CD4-positive, alpha-beta memory T cell (primary cell): ENCODE measurements at regions of chr14 and their contacts with region 1.

Region 1: DNA sequence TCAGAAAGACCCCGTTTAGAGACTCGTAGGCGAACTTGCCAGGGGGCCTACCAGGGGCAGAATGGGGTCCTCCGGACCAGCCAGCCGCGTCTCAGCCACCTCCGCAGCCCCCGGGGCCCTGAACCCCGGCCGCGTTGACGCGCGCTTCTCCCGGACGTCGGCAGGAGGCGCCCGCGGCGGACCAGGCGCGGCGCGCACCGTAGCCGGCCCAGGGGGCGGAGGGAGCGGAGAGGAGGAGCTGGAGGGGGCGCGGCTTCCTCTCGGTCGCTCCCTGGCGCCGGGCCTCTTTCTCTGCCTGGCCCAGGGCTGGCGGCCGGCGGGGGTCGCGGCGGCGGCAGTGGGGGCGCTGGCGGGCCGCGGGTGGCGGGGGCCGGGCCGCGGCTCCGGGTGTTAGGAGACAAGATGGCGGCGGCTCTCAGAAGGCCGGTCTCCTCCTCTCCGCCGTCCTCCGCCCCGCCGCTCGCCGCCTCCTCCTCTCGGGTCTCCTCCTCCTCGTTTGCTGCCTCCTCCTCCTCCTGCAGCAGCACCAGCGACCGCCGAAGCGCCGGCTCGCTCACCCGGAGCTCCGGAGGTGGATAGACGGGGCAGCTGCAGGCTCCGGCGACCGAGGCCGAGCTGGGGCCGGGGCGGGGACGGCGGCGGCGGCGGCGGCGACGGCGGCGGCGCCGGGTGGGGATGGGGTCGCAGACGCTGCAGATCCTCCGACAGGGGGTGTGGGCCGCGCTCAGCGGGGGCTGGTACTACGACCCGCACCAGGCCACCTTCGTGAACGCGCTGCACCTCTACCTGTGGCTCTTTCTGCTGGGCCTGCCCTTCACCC is at the start of gene PCNX1:
- DNase-seq: peak; percentile 94 to 95 (median 95)
- H3K4me3 ChIP-seq: peak within 1 kb of the TSS; percentile 74 to 79
- H3K4me3 Mint-ChIP-seq: peak within 1 kb of the TSS; percentile 88 to 99 (median 94)
- H3K27ac ChIP-seq: peak within 1 kb of the TSS; percentile 79
- H3K27ac Mint-ChIP-seq: peak within 1 kb of the TSS; percentile 95 to 99 (median 98)
- H3K4me1 ChIP-seq: peaks cover 61% of the 10 kb centered on the region
- H3K4me1 Mint-ChIP-seq: peaks cover 38 to 73% (median 61%) of the 10 kb centered on the region in 4 donors
- H3K27me3 ChIP-seq: no peaks in the 10 kb centered on the region
- H3K27me3 Mint-ChIP-seq: no peaks in the 10 kb centered on the region
- total RNA-seq, gene PCNX1: 115 to 128 TPM

Region 2: GRCh38 chr14:70816525-70816924 is 90.9 kb before region 1 on chr14:
- CTCF ChIA-PET with region 1: interaction called, 49 read pairs
- POLR2A ChIA-PET with region 1: interaction called, 15 read pairs
- intact Hi-C with region 1: loop called (anchors 1 kb)
- DNase-seq: no peak
- H3K4me3 ChIP-seq: no peak overlapping the region
- H3K4me3 Mint-ChIP-seq: no peak overlapping the region
- H3K27ac ChIP-seq: no peak overlapping the region
- H3K27ac Mint-ChIP-seq: peak overlapping the region in 2 of 7 donors; percentile 23 to 78
- H3K4me1 ChIP-seq: peaks cover 11% of the 10 kb centered on the region
- H3K4me1 Mint-ChIP-seq: peaks cover 4 to 10% (median 6%) of the 10 kb centered on the region in 4 donors
- H3K27me3 ChIP-seq: no peaks in the 10 kb centered on the region
- H3K27me3 Mint-ChIP-seq: no peaks in the 10 kb centered on the region

Region 3: DNA sequence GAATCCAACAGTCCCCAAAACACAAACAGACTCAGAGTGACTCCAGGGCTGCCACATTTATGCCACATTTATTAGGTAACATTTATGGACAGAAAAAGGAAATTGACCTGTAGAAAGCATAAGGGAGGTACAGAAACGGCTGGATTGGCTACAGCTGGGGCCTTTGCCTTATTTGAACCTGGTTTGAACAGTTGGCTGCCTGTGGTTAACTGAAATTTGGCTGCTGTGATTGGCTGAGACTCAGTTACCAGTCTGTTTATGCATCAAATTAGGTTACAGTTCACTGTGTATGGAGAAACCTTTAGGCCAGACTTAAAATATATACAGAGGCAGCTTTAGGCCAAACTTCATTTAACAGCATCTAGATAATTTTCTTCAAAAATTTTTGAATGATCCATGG is 27.9 kb before region 1 on chr14:
- CTCF ChIA-PET with region 1: interaction called, 85 read pairs
- POLR2A ChIA-PET with region 1: interaction called, 164 read pairs
- intact Hi-C with region 1: no loop called
- DNase-seq: no peak
- H3K4me3 ChIP-seq: no peak overlapping the region
- H3K4me3 Mint-ChIP-seq: no peak overlapping the region
- H3K27ac ChIP-seq: no peak overlapping the region
- H3K27ac Mint-ChIP-seq: no peak overlapping the region
- H3K4me1 ChIP-seq: peaks cover 21% of the 10 kb centered on the region
- H3K4me1 Mint-ChIP-seq: peaks cover 21 to 39% (median 29%) of the 10 kb centered on the region in 4 donors
- H3K27me3 ChIP-seq: no peaks in the 10 kb centered on the region
- H3K27me3 Mint-ChIP-seq: no peaks in the 10 kb centered on the region

Region 4: GRCh38 chr14:70926235-70926830 is 18.9 kb after region 1 on chr14:
- CTCF ChIA-PET with region 1: interaction called, 62 read pairs
- POLR2A ChIA-PET with region 1: interaction called, 73 read pairs
- intact Hi-C with region 1: no loop called
- DNase-seq: no peak
- H3K4me3 ChIP-seq: no peak overlapping the region
- H3K4me3 Mint-ChIP-seq: peak overlapping the region in 4 of 8 donors; percentile 13 to 80 (median 60)
- H3K27ac ChIP-seq: no peak overlapping the region
- H3K27ac Mint-ChIP-seq: peak overlapping the region; percentile 6 to 91 (median 39)
- H3K4me1 ChIP-seq: peaks cover 86% of the 10 kb centered on the region
- H3K4me1 Mint-ChIP-seq: peaks cover 53 to 92% (median 75%) of the 10 kb centered on the region in 4 donors
- H3K27me3 ChIP-seq: no peaks in the 10 kb centered on the region
- H3K27me3 Mint-ChIP-seq: no peaks in the 10 kb centered on the region

Region 5: DNA sequence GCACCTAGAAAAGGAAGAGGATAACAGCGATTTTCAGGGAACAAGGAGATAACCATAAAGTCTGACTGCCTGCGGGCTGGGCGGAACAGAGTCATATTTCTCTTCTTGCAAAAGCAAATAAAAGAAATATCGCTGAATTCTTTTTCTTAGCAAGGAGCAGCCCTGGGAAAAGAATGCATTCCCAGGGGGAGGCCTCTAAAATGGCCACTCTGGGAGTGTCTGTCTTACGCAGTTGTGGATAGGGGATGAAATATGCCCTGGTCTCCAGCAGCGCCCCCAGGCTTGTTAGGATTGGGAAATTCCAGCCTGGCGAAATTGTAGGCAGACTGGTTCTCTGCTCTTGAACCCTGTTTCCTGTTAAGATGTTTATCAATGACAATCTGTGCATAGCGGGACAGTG is 40.3 kb after region 1 on chr14:
- CTCF ChIA-PET with region 1: interaction called, 219 read pairs
- POLR2A ChIA-PET with region 1: interaction called, 136 read pairs
- intact Hi-C with region 1: no loop called
- DNase-seq: no peak
- H3K4me3 ChIP-seq: no peak overlapping the region
- H3K4me3 Mint-ChIP-seq: no peak overlapping the region
- H3K27ac ChIP-seq: no peak overlapping the region
- H3K27ac Mint-ChIP-seq: peak overlapping the region in 4 of 7 donors; percentile 59 to 66 (median 60)
- H3K4me1 ChIP-seq: peaks cover 18% of the 10 kb centered on the region
- H3K4me1 Mint-ChIP-seq: peaks cover 26 to 50% (median 38%) of the 10 kb centered on the region in 4 donors
- H3K27me3 ChIP-seq: no peaks in the 10 kb centered on the region
- H3K27me3 Mint-ChIP-seq: no peaks in the 10 kb centered on the region

Region 6: GRCh38 chr14:70972107-70972976 is 65.0 kb after region 1 on chr14:
- CTCF ChIA-PET with region 1: interaction called, 88 read pairs
- POLR2A ChIA-PET with region 1: interaction called, 41 read pairs
- intact Hi-C with region 1: loop called (anchors 1 kb)
- DNase-seq: peak; percentile 72 to 82 (median 78)
- H3K4me3 ChIP-seq: no peak overlapping the region
- H3K4me3 Mint-ChIP-seq: peak overlapping the region in 4 of 8 donors; percentile 20 to 63 (median 46)
- H3K27ac ChIP-seq: peak overlapping the region; percentile 4
- H3K27ac Mint-ChIP-seq: peak overlapping the region; percentile 67 to 90 (median 87)
- H3K4me1 ChIP-seq: peaks cover 48% of the 10 kb centered on the region
- H3K4me1 Mint-ChIP-seq: peaks cover 40 to 67% (median 52%) of the 10 kb centered on the region in 4 donors
- H3K27me3 ChIP-seq: no peaks in the 10 kb centered on the region
- H3K27me3 Mint-ChIP-seq: no peaks in the 10 kb centered on the region

Region 7: DNA sequence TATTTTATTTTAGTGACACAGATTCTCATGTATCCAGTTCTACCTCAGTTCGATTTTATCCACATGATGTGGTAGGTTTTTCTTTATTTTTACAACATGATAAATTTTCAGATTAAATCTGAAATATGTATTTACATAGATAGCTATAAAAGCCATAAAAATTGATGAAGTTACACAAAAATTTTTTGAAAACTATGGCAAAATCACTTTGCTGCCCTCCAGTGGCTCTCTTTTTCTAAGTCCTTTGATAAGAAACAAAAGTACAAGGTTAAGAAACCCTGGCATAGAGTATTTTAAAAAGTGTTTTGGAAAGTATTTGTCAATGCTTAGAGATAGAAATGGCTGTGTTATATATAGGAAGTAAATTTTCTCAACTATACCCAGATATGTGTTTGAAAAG is 104.1 kb after region 1 on chr14:
- CTCF ChIA-PET with region 1: interaction called, 35 read pairs
- POLR2A ChIA-PET with region 1: interaction called, 8 read pairs
- intact Hi-C with region 1: loop called (anchors 1 kb)
- DNase-seq: peak in 4 of 5 donors; percentile 9 to 25 (median 22)
- H3K4me3 ChIP-seq: no peak overlapping the region
- H3K4me3 Mint-ChIP-seq: peak overlapping the region in 3 of 8 donors; percentile 15 to 55 (median 36)
- H3K27ac ChIP-seq: no peak overlapping the region
- H3K27ac Mint-ChIP-seq: peak overlapping the region in 6 of 7 donors; percentile 38 to 81 (median 70)
- H3K4me1 ChIP-seq: peaks cover 31% of the 10 kb centered on the region
- H3K4me1 Mint-ChIP-seq: peaks cover 35 to 69% (median 49%) of the 10 kb centered on the region in 4 donors
- H3K27me3 ChIP-seq: no peaks in the 10 kb centered on the region
- H3K27me3 Mint-ChIP-seq: no peaks in the 10 kb centered on the region

Region 8: GRCh38 chr14:71021347-71022014 is 114.1 kb after region 1 on chr14:
- CTCF ChIA-PET with region 1: no interaction called
- POLR2A ChIA-PET with region 1: no interaction called
- intact Hi-C with region 1: no loop called
- DNase-seq: no peak
- H3K4me3 ChIP-seq: no peak overlapping the region
- H3K4me3 Mint-ChIP-seq: peak overlapping the region in 5 of 8 donors; percentile 0 to 67 (median 26)
- H3K27ac ChIP-seq: no peak overlapping the region
- H3K27ac Mint-ChIP-seq: peak overlapping the region in 3 of 7 donors; percentile 10 to 52 (median 12)
- H3K4me1 ChIP-seq: peaks cover 15% of the 10 kb centered on the region
- H3K4me1 Mint-ChIP-seq: peaks cover 19 to 43% (median 32%) of the 10 kb centered on the region in 4 donors
- H3K27me3 ChIP-seq: no peaks in the 10 kb centered on the region
- H3K27me3 Mint-ChIP-seq: no peaks in the 10 kb centered on the region

Region 9: DNA sequence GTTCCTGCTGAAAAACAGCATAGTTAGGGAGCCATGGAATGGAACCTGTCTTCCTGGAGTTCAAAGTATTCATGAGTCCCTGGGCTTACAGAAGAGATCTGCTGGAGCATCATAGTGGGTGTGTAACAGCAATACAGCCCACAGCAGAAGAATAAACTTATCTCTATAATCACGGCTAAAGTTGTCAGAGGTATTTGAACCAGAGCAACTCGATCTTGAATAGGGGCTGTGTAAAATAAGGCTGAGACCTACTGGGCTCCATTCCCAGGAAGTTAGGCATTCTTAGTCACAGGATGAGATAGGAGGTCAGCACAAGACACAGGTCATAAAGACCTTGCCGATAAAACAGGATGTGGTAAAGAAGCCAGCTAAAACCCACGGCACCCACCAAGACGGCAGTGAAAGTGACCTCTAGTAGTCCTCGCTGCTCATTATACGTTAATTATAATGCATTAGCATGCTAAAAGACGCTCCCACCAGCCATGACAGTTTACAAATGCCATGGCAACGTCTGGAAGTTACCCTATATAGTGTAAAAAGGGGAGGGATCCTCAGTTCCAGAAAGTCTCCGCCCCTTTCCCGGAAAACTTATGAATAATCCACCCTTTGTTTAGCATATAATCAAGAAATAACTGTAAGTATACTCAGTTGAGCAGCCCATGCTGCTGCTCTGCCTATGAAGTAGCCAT is 223.2 kb after region 1 on chr14:
- CTCF ChIA-PET with region 1: no interaction called
- POLR2A ChIA-PET with region 1: no interaction called
- intact Hi-C with region 1: no loop called
- DNase-seq: no peak
- H3K4me3 ChIP-seq: no peak overlapping the region
- H3K4me3 Mint-ChIP-seq: peak overlapping the region in 1 of 8 donors; percentile 11
- H3K27ac ChIP-seq: no peak overlapping the region
- H3K27ac Mint-ChIP-seq: peak overlapping the region in 1 of 7 donors; percentile 14
- H3K4me1 ChIP-seq: no peaks in the 10 kb centered on the region
- H3K4me1 Mint-ChIP-seq: peaks cover 0 to 11% (median 8%) of the 10 kb centered on the region in 4 donors
- H3K27me3 ChIP-seq: no peaks in the 10 kb centered on the region
- H3K27me3 Mint-ChIP-seq: no peaks in the 10 kb centered on the region

Region 10: GRCh38 chr14:71651228-71651627 is 743.8 kb after region 1 on chr14:
- CTCF ChIA-PET with region 1: no interaction called
- POLR2A ChIA-PET with region 1: no interaction called
- intact Hi-C with region 1: no loop called
- DNase-seq: no peak
- H3K4me3 ChIP-seq: no peak overlapping the region
- H3K4me3 Mint-ChIP-seq: peak overlapping the region in 1 of 8 donors; percentile 6
- H3K27ac ChIP-seq: no peak overlapping the region
- H3K27ac Mint-ChIP-seq: no peak overlapping the region
- H3K4me1 ChIP-seq: no peaks in the 10 kb centered on the region
- H3K4me1 Mint-ChIP-seq: no peaks in the 10 kb centered on the region
- H3K27me3 ChIP-seq: no peaks in the 10 kb centered on the region
- H3K27me3 Mint-ChIP-seq: no peaks in the 10 kb centered on the region